Calu3 (cell line): ENCODE measurements at regions of chr11 and their contacts with region 1.

Region 1: DNA sequence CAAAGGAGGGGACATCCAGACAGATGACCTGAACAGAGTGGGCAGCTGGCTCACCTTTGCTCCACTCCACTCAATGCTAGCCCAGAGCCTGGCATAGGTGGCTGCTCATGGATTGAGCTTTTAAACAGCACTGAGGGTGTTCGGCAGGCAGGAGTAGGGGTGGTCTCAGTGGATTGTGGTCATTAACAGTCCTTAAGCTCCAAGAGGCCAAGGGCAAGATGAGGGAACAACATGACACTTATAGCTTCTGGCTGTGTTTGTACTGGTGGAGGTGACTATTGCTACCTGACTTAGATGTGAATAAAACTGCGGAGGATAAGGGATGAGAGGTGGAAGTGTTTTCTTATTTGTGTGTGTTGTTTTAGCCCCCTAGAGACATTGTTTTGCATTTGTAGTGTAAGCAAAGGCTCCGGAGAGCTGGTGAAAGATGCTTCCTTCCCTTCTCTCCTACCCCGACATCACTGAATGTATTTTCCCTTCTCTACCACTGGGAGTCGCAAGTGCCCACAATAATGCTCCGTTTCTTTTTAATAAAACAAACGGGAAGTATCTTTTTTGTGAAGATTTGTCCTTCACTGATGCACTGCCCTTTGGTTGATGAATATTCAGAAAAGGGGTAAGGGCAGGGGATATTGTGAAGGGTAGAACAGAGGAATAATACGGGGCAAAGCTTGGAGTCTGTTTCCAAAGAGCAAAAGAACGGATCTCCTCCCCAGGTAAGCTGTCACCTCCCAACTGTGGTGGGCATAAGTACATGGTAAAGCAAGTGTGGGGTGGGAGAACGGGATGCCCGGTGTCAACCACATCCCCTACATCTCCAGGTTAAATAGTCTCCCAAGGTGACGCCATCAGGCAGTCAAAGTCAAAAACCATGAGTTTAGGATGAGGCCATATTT is 27.5 kb upstream of the MTNR1B start:
- DNase-seq: peak; percentile 5
- H3K4me3 Mint-ChIP-seq: no peak overlapping the region
- H3K27ac Mint-ChIP-seq: no peak overlapping the region
- H3K4me1 Mint-ChIP-seq: peaks cover 29% of the 10 kb centered on the region
- H3K27me3 Mint-ChIP-seq: no peaks in the 10 kb centered on the region
- CTCF ChIP-seq: peak; percentile 23

Region 2: GRCh38 chr11:92969634-92970347 is 27.9 kb after region 1 on chr11 and contains the start of gene MTNR1B:
- CTCF ChIA-PET with region 1: no interaction called
- intact Hi-C with region 1: no loop called
- DNase-seq: no peak
- H3K4me3 Mint-ChIP-seq: no peak within 1 kb of the TSS
- H3K27ac Mint-ChIP-seq: no peak within 1 kb of the TSS
- H3K4me1 Mint-ChIP-seq: no peaks in the 10 kb centered on the region
- H3K27me3 Mint-ChIP-seq: no peaks in the 10 kb centered on the region
- CTCF ChIP-seq: no peak
- total RNA-seq, gene MTNR1B: not detected in 2 replicates

Region 3: DNA sequence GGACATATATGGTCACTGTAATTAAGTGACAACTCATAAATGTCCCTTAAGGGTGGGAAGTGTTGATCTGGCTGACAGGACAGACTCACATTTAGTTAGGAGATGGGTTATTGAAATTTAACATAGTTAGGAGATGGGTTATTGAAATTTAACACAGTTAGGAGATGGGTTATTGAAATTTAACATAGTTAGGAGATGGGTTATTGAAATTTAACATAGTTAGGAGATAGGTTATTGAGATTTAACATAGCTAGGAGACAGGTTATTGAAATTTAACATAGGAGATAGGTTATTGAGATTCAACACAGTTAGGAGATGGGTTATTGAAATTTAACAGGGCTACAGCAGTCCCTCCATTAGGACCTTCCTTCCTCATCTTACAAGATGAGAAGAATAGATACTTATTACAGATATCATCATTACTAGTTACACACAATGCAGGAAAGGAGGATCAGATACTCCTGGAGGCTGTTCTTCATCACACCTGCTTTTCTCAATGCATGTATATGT is 126.0 kb after region 1 on chr11:
- CTCF ChIA-PET with region 1: interaction called, 8 read pairs
- intact Hi-C with region 1: loop called (anchors 5 kb)
- DNase-seq: no peak
- H3K4me3 Mint-ChIP-seq: no peak overlapping the region
- H3K27ac Mint-ChIP-seq: no peak overlapping the region
- H3K4me1 Mint-ChIP-seq: no peaks in the 10 kb centered on the region
- H3K27me3 Mint-ChIP-seq: no peaks in the 10 kb centered on the region
- CTCF ChIP-seq: no peak

Region 4: DNA sequence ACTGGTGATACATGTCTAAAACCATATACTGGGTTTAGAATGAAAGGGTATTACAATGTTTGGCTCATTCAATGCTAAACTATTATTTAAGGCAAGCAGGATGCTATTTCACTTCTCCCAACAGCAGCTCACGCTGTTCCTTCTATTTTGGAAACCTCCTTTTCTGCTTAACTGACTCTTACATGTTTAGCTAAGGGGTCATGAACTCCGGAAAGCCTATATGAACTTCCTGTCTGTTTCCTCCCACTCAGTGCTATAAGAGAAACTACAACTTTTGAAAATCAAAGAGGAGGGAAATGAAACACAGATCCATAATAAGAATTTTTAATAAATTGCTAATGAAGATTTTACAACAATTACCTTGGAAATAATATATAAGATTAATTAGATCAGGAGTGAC is 224.9 kb after region 1 on chr11:
- CTCF ChIA-PET with region 1: no interaction called
- intact Hi-C with region 1: loop called (anchors 1 kb)
- DNase-seq: no peak
- H3K4me3 Mint-ChIP-seq: no peak overlapping the region
- H3K27ac Mint-ChIP-seq: no peak overlapping the region
- H3K4me1 Mint-ChIP-seq: no peaks in the 10 kb centered on the region
- H3K27me3 Mint-ChIP-seq: no peaks in the 10 kb centered on the region
- CTCF ChIP-seq: no peak

Region 5: GRCh38 chr11:93221539-93221938 is 279.6 kb after region 1 on chr11:
- CTCF ChIA-PET with region 1: interaction called, 4 read pairs
- intact Hi-C with region 1: loop called (anchors 5 kb)
- DNase-seq: no peak
- H3K4me3 Mint-ChIP-seq: no peak overlapping the region
- H3K27ac Mint-ChIP-seq: no peak overlapping the region
- H3K4me1 Mint-ChIP-seq: no peaks in the 10 kb centered on the region
- H3K27me3 Mint-ChIP-seq: peaks cover 25% of the 10 kb centered on the region
- CTCF ChIP-seq: no peak

Region 6: DNA sequence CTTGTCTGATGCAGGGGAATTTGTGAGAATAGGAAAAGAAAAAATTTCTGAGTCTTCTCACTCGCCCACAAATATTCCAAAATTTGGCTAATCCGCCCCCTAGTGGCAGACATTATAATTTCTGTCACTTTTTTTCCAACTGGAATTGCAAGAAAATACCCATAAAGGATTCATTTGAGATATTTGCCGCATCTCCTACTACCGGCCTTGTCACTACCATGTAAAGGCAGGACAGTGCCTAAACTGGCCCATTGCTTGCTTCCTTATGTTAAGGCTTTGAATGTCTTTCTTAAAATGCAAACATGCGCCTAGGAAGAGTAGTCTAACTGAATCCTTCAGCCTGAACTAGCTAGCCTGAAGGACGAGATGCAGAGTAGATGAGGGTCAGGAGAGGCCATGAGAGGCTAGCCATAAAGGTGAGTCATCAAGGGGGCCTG is 710.3 kb after region 1 on chr11:
- CTCF ChIA-PET with region 1: no interaction called
- intact Hi-C with region 1: loop called (anchors 5 kb)
- DNase-seq: peak; percentile 52
- H3K4me3 Mint-ChIP-seq: no peak overlapping the region
- H3K27ac Mint-ChIP-seq: no peak overlapping the region
- H3K4me1 Mint-ChIP-seq: no peaks in the 10 kb centered on the region
- H3K27me3 Mint-ChIP-seq: peaks cover 49% of the 10 kb centered on the region
- CTCF ChIP-seq: peak; percentile 24